Posterior cingulate gyrus (tissue), 11 donors: ENCODE measurements at regions of chr17 and their contacts with region 1.

Region 1: GRCh38 chr17:40417609-40418427 is at the start of gene TOP2A:
- DNase-seq: peak; percentile 82 to 99 (median 96)

Region 2: GRCh38 chr17:40251576-40251975 is 166.2 kb before region 1 on chr17:
- intact Hi-C with region 1: no loop called
- DNase-seq: no peak

Region 3: GRCh38 chr17:40358323-40359038 is 59.3 kb before region 1 on chr17:
- intact Hi-C with region 1: loop called (anchors 2 kb)
- DNase-seq: peak; percentile 81 to 98 (median 94)